CD4-positive, alpha-beta T cell (primary cell): ENCODE measurements at regions of chr5 and their contacts with region 1.

Region 1: DNA sequence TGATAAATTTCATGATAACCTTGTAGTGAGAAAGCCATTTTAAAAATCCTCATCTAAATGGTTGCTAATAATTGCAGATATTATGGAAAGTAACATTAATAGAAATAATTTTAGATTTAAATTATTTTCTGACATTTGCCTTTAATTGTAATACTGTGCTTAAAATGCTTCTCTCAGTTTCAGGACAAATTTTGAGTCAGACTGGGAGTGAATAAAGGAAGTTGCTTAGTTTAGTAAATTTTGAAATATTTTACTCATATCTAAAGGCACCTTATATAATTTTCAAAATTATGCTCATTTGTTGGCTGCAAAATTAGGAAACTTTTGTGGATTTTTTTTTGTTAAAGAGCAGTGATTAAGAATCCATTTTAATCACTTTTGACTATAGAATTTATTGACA is 93.8 kb downstream of the CSNK1G3 start:
- DNase-seq: no peak
- ATAC-seq: no peak
- H3K4me3 ChIP-seq: no peak overlapping the region
- H3K4me3 Mint-ChIP-seq: no peak overlapping the region
- H3K27ac ChIP-seq: no peak overlapping the region
- H3K27ac Mint-ChIP-seq: no peak overlapping the region
- H3K4me1 ChIP-seq: no peaks in the 10 kb centered on the region
- H3K4me1 Mint-ChIP-seq: no peaks in the 10 kb centered on the region
- H3K27me3 ChIP-seq: no peaks in the 10 kb centered on the region
- H3K27me3 Mint-ChIP-seq: no peaks in the 10 kb centered on the region
- CTCF ChIP-seq: no peak

Region 2: GRCh38 chr5:121949867-121950266 is 1656.0 kb before region 1 on chr5:
- CTCF ChIA-PET with region 1: no interaction called
- POLR2A ChIA-PET with region 1: no interaction called
- intact Hi-C with region 1: loop called in 1 of 2 experiments (anchors 5 kb)
- DNase-seq: peak in 4 of 14 experiments; percentile 22 to 34 (median 30)
- ATAC-seq: peak; percentile 49
- H3K4me3 ChIP-seq: no peak overlapping the region
- H3K4me3 Mint-ChIP-seq: no peak overlapping the region
- H3K27ac ChIP-seq: no peak overlapping the region
- H3K27ac Mint-ChIP-seq: no peak overlapping the region
- H3K4me1 ChIP-seq: no peaks in the 10 kb centered on the region
- H3K4me1 Mint-ChIP-seq: no peaks in the 10 kb centered on the region
- H3K27me3 ChIP-seq: peaks cover 0 to 8% of the 10 kb centered on the region in 2 experiments
- H3K27me3 Mint-ChIP-seq: peaks cover 26% of the 10 kb centered on the region
- CTCF ChIP-seq: peak; percentile 40

Region 3: GRCh38 chr5:123414975-123415374 is 190.8 kb before region 1 on chr5:
- CTCF ChIA-PET with region 1: interaction called, 4 read pairs
- POLR2A ChIA-PET with region 1: interaction called, 3 read pairs
- intact Hi-C with region 1: loop called in 1 of 2 experiments (anchors 5 kb)
- DNase-seq: no peak
- ATAC-seq: no peak
- H3K4me3 ChIP-seq: no peak overlapping the region
- H3K4me3 Mint-ChIP-seq: no peak overlapping the region
- H3K27ac ChIP-seq: no peak overlapping the region
- H3K27ac Mint-ChIP-seq: no peak overlapping the region
- H3K4me1 ChIP-seq: no peaks in the 10 kb centered on the region
- H3K4me1 Mint-ChIP-seq: peaks cover 33% of the 10 kb centered on the region
- H3K27me3 ChIP-seq: no peaks in the 10 kb centered on the region
- H3K27me3 Mint-ChIP-seq: no peaks in the 10 kb centered on the region
- CTCF ChIP-seq: no peak